ENCODE measurements at regions of chr5 and their contacts with region 1.

Region 1: GRCh38 chr5:125612051-125612738 is 811.0 kb upstream of the GRAMD2B start:
- DNase-seq: peak; percentile 4 to 18
- ATAC-seq: peak; percentile 73 to 91
- H3K4me3 ChIP-seq: peak overlapping the region in 1 of 4 donors; percentile 5
- H3K27ac ChIP-seq: no peak overlapping the region
- H3K4me1 ChIP-seq: peaks cover 5 to 9% of the 10 kb centered on the region in 2 donors
- H3K27me3 ChIP-seq: no peaks in the 10 kb centered on the region
- CTCF ChIP-seq: no peak
- POLR2A ChIP-seq: no peak

Region 2: DNA sequence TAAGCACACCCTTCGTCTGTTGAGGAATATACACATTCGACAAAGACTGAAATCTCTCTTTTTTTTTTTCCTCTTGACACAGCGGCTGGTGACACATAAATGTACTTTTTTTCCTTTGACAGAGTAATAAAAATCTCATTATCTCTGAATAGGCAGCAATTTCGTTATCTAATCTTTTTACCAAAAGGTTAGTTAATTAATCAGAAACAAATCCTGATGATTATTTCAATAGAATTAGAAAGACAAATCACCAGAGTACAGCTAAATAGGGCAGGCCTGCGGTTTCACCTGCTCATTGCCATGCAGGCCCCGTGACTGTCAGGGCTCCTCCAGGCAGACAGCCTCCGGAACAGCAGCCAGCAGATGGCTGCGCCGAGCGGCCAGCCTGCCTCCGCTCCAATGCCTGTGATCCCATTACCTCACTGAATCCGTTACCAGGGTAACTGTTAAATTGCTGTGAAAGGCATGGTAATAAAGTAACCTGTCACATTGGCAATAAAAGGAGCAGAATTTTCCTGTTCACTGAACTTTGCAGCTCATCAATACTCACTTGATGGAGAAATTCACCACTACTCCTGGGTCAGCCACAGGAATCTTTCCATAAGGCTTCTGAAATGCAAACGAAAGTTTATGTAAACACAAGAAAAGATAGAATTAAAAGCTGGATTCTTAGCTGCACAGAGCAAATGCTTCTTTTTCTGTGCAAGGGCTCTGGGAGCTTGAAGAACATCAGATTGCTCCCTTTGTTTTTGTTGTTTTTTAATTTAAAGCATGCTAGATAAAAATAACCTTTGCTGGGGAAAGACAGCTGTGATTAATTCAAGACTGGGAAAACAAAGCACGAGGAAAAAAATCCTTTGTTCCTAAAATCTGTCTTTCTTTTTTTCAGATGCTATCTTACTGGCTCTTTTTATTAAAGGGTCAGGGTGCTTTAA is 199.4 kb before region 1 on chr5:
- in situ Hi-C with region 1: no loop called
- intact Hi-C with region 1: loop called (anchors 5 kb)
- DNase-seq: peak; percentile 75 to 78
- ATAC-seq: peak; percentile 87 to 89
- H3K4me3 ChIP-seq: peak overlapping the region in 3 of 4 donors; percentile 6 to 33 (median 7)
- H3K27ac ChIP-seq: peak overlapping the region; percentile 44 to 67 (median 66)
- H3K4me1 ChIP-seq: peaks cover 31 to 33% of the 10 kb centered on the region in 2 donors
- H3K27me3 ChIP-seq: no peaks in the 10 kb centered on the region
- CTCF ChIP-seq: peak in 3 of 5 experiments; percentile 29 to 53 (median 50)
- POLR2A ChIP-seq: no peak

Region 3: GRCh38 chr5:125476901-125477585 is 135.2 kb before region 1 on chr5:
- in situ Hi-C with region 1: no loop called
- intact Hi-C with region 1: no loop called
- DNase-seq: no peak
- ATAC-seq: no peak
- H3K4me3 ChIP-seq: no peak overlapping the region
- H3K27ac ChIP-seq: no peak overlapping the region
- H3K4me1 ChIP-seq: no peaks in the 10 kb centered on the region
- H3K27me3 ChIP-seq: no peaks in the 10 kb centered on the region
- CTCF ChIP-seq: no peak
- POLR2A ChIP-seq: no peak

Measured in gastrocnemius medialis (tissue), 4 donors.